ENCODE measurements at regions of chr17 and their contacts with region 1.

Region 1: DNA sequence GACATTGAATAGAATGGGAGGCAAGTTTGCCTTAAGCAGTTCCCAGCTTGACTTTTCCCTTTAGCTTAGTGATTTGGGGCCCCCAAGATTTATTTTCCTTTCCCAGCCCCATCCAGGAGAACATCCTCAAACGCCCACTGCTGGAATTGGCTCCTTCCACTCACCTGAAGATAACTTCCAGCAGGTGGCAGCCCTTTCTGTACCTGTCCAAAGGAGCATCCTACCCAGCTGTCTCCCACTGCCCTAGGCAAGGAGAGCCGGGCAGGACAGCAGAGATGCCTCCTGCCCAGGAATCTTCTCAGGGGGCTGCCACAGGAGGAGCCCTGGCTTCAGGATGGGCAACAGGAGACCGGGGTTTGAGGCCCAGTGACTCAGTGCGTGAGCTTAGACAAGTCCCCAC is 6.4 kb downstream of the CACNG5 start:
- DNase-seq: no peak

Region 2: DNA sequence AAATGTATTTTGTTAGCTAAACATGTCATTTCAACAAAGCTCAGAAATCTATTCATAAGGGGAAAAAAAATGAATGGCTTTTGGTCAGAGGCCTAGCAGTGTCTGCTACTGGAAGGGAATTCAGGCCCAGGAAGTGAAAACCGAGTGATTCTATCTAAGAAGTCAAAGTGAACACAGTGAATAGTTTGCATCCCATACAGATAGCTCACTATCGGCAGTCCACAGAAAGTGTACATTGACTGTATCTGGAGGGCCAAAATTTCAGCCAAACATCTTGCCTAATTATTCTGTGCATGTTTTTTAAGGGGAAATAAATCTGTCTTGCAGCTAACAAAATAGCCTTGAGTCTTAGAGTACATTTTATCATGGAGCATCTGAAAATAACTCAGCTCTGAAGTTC is 220.8 kb before region 1 on chr17:
- intact Hi-C with region 1: no loop called
- DNase-seq: no peak

Region 3: GRCh38 chr17:66789961-66790437 is 51.3 kb before region 1 on chr17:
- intact Hi-C with region 1: loop called (anchors 10 kb)
- DNase-seq: peak in 4 of 42 donors; percentile 17 to 46 (median 26)

Measured in head of caudate nucleus (tissue), 42 donors.